Right ventricle myocardium inferior (tissue), 1 donor: ENCODE measurements at regions of chr7 and their contacts with region 1.

Region 1: GRCh38 chr7:2477447-2478398 is 1.5 kb upstream of the GRIFIN start:
- DNase-seq: peak; percentile 87
- ATAC-seq: peak; percentile 84

Region 2: GRCh38 chr7:2403014-2403717 is 74.6 kb before region 1 on chr7 and contains the start of gene CHST12:
- intact Hi-C with region 1: no loop called
- DNase-seq: peak; percentile 97
- ATAC-seq: peak; percentile 91
- total RNA-seq, gene CHST12: 13.5 TPM

Region 3: GRCh38 chr7:2417981-2418481 is 59.7 kb before region 1 on chr7:
- intact Hi-C with region 1: no loop called
- DNase-seq: no peak
- ATAC-seq: peak; percentile 63

Region 4: DNA sequence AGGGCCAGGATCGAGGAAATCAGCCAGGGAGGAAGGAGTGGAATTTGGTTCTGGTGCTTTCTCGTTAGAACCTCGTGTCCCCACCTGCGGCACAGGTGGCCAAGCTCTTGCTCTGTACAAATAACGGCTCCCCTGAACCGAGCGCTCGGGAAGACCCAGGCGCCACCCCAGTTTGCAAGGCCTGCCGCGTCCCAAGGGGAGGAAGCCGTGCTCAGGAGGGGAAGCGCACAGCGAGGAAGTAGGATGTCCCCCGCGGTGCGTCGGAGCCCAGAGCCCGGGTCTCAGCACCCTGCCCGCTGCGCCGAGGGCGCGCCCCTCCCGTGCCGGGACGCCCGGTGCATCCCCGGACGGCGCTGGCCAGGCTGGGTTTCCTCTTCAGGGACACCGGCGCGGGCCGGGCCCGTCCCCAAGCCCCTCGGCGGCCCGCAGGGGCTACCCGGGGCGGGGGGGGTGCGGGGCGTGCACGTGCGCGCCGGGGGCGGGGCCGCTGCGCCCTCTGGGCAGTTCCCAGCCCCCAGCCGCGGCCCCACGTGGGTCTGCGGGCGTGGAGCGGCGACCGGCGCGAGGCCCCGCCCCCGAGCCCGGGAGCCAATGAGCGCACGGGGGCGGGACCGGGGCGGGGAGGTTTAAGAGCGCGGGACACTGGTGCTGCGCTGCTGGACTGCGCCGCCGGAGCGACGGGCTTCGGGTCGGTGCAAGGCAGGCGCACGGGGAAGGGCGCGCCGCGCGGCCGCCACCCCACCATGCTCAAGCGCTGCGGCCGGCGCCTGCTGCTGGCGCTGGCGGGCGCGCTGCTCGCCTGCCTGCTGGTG is 41.6 kb after region 1 on chr7 and contains the start of gene LFNG:
- intact Hi-C with region 1: loop called (anchors 5 kb)
- DNase-seq: peak; percentile 94
- ATAC-seq: peak; percentile 92
- total RNA-seq, gene LFNG: 6.5 TPM

Region 5: DNA sequence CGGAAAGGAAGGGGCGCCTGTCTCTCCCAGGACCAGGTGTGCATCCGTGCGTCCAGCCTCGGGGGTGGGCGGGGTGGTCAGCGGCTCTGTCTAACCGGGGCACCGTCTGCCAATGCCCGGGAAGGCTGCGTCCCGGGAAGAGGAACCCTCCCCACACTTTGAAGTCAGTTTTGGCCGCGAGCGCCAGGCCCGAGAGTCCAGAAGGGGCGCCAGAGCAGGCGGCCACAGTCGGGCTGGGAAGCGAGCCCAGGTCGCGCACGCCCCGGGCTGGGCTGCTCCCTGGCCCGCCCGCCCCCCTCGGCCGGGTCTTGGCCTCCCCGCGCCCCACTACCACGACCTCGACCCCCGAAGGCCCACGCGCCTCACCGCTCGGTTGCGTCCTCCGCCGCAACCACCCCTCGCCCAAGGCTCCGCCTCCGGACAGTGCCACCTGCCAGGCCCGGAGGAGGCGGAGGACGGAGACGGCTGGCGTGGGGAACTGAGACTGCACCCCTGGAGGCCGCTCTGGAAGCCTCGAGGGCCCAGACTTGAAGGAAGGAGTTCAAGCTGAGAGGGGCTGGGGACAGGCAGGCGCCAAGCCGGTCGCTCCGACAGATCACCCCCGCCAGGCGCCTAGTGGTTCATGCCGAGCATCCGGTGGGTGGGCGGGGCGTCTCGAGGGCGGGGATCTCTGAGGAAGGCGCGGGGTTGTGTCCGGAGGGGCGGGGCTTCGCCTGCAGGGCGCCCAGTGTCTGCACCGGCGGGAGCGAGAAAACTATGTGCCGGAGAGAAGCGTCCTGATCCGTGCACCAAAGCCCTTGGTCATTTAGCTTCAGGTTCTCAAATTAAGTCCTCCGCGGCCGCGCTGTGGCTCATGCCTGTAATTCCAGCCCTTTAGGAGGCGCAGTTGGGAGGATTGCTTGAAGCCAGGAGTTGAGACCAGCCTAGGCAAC is 77.7 kb after region 1 on chr7 and contains the start of gene BRAT1:
- intact Hi-C with region 1: loop called (anchors 5 kb)
- DNase-seq: peak; percentile 99
- ATAC-seq: peak; percentile 94
- total RNA-seq, gene BRAT1: 14.8 TPM